Mammary epithelial cell (primary cell): ENCODE measurements at regions of chrX and their contacts with region 1.

Region 1: DNA sequence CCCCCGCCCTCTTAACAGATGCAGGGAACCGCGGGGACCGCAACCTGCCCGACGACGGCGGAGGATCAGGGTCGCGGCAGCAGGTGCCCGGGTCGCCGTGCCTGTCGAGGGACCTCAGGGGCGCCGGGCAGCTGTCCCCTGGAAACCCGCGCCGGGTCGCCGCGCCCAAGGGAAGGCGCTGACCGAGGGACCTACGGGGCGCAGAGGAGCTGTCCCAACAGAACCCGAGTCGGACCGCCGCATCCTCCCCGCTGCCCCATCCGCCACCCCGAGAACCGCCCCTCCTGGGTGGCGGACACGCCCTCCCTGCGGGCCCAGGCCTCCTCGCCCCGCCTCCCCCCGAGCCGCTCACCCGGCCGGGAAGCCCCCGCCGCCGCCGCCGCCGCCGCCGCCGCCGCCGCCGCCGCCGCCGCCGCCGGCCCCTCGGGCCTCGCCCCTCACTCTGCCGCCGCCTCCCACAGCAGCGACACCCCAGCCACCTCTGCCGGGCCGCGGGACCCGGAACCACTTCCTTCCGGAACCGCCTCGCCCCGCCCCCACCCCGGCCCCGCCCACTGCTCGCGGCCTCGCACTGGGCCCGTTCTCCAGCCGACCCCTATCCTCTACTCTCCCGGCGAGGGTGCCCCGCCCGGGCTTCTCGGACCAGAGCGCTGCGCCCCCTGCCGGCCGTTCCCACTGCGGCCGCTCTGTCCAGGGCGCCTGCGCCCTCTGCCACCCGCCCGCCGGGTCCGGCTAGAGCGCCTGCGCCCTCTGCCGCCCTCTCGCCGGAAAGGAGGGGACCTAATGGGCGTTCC is at the start of gene BCLAF3:
- DNase-seq: peak; percentile 79
- H3K4me3 ChIP-seq: peak within 1 kb of the TSS; percentile 55 to 72 (median 71)
- H3K27ac ChIP-seq: peak within 1 kb of the TSS; percentile 16
- H3K4me1 ChIP-seq: no peaks in the 10 kb centered on the region
- H3K27me3 ChIP-seq: no peaks in the 10 kb centered on the region
- CTCF ChIP-seq: peak; percentile 42 to 68
- total RNA-seq, gene BCLAF3: 7.5 to 11.0 TPM

Region 2: GRCh38 chrX:19272452-19272851 is 718.3 kb before region 1 on chrX:
- CTCF ChIA-PET with region 1: no interaction called
- dilution Hi-C with region 1: no loop called
- in situ Hi-C with region 1: no loop called
- intact Hi-C with region 1: no loop called
- DNase-seq: peak; percentile 26
- H3K4me3 ChIP-seq: no peak overlapping the region
- H3K27ac ChIP-seq: no peak overlapping the region
- H3K4me1 ChIP-seq: no peaks in the 10 kb centered on the region
- H3K27me3 ChIP-seq: no peaks in the 10 kb centered on the region
- CTCF ChIP-seq: no peak

Region 3: GRCh38 chrX:19593690-19594089 is 397.1 kb before region 1 on chrX:
- CTCF ChIA-PET with region 1: interaction called, 10 read pairs
- dilution Hi-C with region 1: no loop called
- in situ Hi-C with region 1: no loop called
- intact Hi-C with region 1: no loop called
- DNase-seq: no peak
- H3K4me3 ChIP-seq: no peak overlapping the region
- H3K27ac ChIP-seq: no peak overlapping the region
- H3K4me1 ChIP-seq: peaks cover 3% of the 10 kb centered on the region
- H3K27me3 ChIP-seq: no peaks in the 10 kb centered on the region
- CTCF ChIP-seq: peak; percentile 45 to 55

Region 4: GRCh38 chrX:19721726-19722370 is 268.9 kb before region 1 on chrX:
- CTCF ChIA-PET with region 1: no interaction called
- dilution Hi-C with region 1: no loop called
- in situ Hi-C with region 1: no loop called
- intact Hi-C with region 1: no loop called
- DNase-seq: no peak
- H3K4me3 ChIP-seq: no peak overlapping the region
- H3K27ac ChIP-seq: no peak overlapping the region
- H3K4me1 ChIP-seq: peaks cover 3% of the 10 kb centered on the region
- H3K27me3 ChIP-seq: no peaks in the 10 kb centered on the region
- CTCF ChIP-seq: no peak